ENCODE measurements at regions of chr16 and their contacts with region 1.

Region 1: GRCh38 chr16:80120899-80121521 is 419.8 kb upstream of the DYNLRB2 start:
- DNase-seq: no peak
- H3K4me3 ChIP-seq: no peak overlapping the region
- H3K27ac ChIP-seq: no peak overlapping the region
- H3K4me1 ChIP-seq: peaks cover 10% of the 10 kb centered on the region
- H3K27me3 ChIP-seq: no peaks in the 10 kb centered on the region
- CTCF ChIP-seq: no peak
- EP300 ChIP-seq: no peak
- POLR2A ChIP-seq: no peak

Region 2: DNA sequence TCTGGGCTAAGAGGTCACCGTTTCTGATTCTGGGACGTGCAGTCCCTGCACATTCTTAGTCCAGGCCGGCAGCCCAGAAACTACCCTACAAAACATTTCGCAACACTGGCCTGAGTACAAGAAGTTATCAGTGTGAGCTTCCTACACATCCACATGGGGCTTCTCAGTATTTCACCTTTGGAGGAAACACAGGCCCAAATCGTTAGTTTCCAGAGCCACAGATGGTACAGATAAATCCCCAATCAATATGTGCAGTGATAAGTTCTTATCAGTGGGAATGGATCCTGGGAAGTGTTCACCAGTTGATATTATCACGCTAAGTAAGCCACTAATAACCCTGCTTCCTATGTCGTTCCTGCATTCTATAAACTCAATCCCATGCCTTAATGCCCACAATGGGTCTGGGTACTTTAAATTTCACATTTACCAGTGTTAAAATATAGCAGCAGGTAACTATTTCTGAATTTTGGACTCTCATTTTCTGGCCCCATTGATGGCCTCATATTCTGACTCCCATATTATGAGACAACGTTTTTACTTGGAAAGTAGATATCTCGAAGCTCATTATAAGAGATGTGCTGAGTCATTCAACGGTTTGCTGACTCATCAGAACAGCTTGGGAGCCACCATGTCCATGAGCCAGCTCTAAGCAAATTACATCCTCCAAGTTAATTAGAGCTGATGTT is 150.3 kb before region 1 on chr16:
- intact Hi-C with region 1: no loop called
- DNase-seq: peak; percentile 35 to 77 (median 67)
- H3K4me3 ChIP-seq: no peak overlapping the region
- H3K27ac ChIP-seq: peak overlapping the region in 1 of 2 donors; percentile 26
- H3K4me1 ChIP-seq: peaks cover 5% of the 10 kb centered on the region
- H3K27me3 ChIP-seq: no peaks in the 10 kb centered on the region
- CTCF ChIP-seq: peak in 1 of 3 donors; percentile 20
- EP300 ChIP-seq: no peak
- POLR2A ChIP-seq: no peak

Region 3: DNA sequence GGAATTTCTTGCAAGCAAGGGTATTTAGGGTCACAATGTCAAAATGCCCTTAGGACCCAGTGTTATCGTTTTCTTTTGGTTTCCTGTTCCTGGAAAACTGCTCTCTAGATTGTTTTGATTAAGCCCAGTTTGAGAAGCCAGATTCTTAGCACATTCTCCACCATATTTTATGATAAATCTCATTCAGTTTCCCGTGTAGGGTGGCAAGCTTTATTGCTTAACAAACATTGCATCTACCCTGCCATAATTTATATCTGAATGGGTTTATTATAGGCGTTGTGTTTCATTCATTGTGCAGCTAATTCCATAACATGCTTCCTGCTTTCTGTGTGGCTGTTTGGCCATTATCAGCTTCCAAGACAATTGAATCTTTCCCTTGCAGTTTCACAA is 30.7 kb after region 1 on chr16:
- intact Hi-C with region 1: loop called in 1 of 4 experiments (anchors 2 kb)
- DNase-seq: no peak
- H3K4me3 ChIP-seq: no peak overlapping the region
- H3K27ac ChIP-seq: no peak overlapping the region
- H3K4me1 ChIP-seq: peaks cover 5% of the 10 kb centered on the region
- H3K27me3 ChIP-seq: no peaks in the 10 kb centered on the region
- CTCF ChIP-seq: no peak
- EP300 ChIP-seq: no peak
- POLR2A ChIP-seq: no peak

Measured in ovary (tissue), 10 donors.